PC-3 (cell line): ENCODE measurements at regions of chr6 and their contacts with region 1.

Region 1: DNA sequence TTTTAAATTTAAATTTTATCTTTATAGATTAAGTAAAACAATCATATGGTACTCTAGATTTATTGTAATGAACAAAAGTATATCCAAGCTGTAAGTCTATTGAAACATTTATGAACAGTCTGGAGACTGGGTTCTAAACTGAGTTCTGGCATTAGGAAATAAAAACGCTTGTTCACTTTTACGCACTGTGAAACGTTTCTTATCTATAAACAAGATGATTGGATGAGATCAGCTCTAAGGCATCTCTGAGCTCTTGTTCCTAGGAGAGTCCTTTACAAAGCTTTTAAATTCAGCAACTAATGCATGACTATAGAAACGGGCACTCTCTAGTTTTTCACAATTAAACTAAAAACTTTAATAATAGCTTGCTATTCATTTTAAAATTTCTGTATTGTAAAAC is 6.8 kb downstream of the HUS1B start:
- DNase-seq: no peak
- ATAC-seq: no peak
- H3K4me3 ChIP-seq: no peak overlapping the region
- H3K27ac ChIP-seq: no peak overlapping the region
- H3K4me1 ChIP-seq: no peaks in the 10 kb centered on the region
- H3K27me3 ChIP-seq: no peaks in the 10 kb centered on the region
- CTCF ChIP-seq: no peak

Region 2: DNA sequence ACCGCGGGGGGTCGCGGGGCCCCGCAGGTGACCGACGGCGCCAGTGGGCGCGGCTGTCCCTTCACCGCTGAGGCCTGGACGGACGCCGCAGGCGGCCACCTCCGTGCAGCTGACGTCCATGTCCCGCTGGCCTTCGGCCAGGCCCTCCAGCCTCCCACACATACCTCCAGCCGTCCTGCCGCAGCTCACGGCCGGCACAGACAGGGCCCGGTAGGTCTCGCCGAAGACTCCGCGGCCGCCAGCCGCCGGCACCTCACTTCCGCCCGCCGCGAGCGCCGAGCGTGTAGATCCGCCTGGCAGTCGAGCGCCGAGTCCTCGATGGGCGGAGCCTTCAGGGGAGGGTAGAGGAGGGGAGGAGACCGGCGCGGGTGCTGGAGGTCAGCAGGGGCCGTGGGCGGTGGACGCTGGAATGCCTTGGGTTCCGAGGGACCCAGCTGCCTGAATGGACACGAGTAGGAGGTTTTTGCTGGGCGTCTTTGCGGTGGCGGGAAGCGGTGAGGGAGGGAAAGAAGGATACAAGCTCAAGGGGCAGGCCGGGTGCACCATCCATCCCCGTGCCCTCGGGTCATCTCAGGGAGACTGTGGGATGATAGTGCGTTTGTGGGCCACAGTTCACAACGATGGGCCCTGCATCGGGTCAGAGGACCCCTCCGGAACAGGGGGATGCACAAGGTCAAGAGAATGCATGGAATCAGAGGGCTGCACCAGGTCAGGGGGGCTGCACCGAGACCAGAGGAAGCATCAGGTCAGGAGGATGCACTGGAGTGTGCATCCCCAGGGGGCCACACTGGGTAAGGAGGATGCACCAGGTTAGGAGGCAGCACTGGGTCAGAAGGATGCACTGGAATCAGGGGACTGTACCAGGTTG is 43.0 kb after region 1 on chr6 and contains the start of gene EXOC2:
- CTCF ChIA-PET with region 1: no interaction called
- POLR2A ChIA-PET with region 1: interaction called, 13 read pairs
- intact Hi-C with region 1: no loop called
- DNase-seq: peak; percentile 87
- ATAC-seq: peak; percentile 83
- H3K4me3 ChIP-seq: peak within 1 kb of the TSS; percentile 100
- H3K27ac ChIP-seq: peak within 1 kb of the TSS; percentile 54
- H3K4me1 ChIP-seq: peaks cover 15% of the 10 kb centered on the region
- H3K27me3 ChIP-seq: no peaks in the 10 kb centered on the region
- CTCF ChIP-seq: no peak
- total RNA-seq, gene EXOC2: 24.8 and 27.7 TPM in 2 replicates